ENCODE measurements at regions of chr16 and their contacts with region 1.

Region 1: DNA sequence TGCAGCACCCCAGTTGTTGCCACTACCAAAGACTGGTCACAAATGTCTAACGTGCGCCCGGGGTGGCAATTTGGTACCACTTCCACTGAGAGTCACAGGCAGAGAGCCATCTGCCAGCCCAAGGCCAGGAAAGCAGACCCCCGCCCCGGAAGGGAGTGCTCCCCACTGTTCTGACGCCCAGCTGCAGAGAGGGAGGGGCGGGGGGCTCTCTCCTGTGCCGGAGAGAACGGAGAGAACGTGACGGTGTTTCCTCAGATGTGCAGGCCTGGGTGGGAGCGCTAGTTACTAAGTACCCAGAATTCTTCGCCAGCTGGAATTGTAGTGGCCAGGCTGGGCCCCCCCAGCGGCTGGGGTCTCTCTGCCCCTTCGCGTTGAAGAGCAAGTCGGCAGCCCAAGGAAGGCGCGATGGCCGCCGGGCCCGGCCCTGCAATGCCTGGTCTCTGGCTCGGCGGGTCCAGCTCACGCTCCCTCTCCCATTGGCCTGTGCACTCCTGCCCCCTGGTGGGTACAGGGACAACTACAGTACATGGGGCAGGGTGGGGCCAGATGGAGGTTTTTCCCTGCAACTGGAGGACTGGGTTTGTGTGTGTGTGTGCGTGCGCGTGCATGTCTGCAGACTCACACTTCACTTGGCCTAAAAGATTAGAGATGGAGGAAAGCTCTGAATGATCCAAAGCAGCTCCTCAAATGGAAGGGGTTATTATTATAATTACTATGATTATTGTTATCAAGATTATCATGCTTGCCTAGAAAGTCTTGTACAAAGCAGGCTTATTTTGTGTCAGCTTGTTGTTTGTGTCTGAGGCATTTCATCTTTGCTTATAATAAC is 107.1 kb downstream of the AMFR start:
- DNase-seq: peak; percentile 60
- H3K4me3 ChIP-seq: no peak overlapping the region
- H3K27ac ChIP-seq: no peak overlapping the region
- H3K4me1 ChIP-seq: no peaks in the 10 kb centered on the region
- CTCF ChIP-seq: peak; percentile 87

Region 2: GRCh38 chr16:55944377-55944802 is 373.8 kb before region 1 on chr16:
- CTCF ChIA-PET with region 1: no interaction called
- POLR2A ChIA-PET with region 1: no interaction called
- intact Hi-C with region 1: loop called (anchors 1 kb)
- DNase-seq: peak; percentile 39
- H3K4me3 ChIP-seq: no peak overlapping the region
- H3K27ac ChIP-seq: no peak overlapping the region
- H3K4me1 ChIP-seq: no peaks in the 10 kb centered on the region
- CTCF ChIP-seq: peak; percentile 96

Region 3: GRCh38 chr16:56191156-56191815 is 126.9 kb before region 1 on chr16 and contains the start of gene GNAO1:
- CTCF ChIA-PET with region 1: no interaction called
- POLR2A ChIA-PET with region 1: no interaction called
- intact Hi-C with region 1: no loop called
- DNase-seq: no peak
- H3K4me3 ChIP-seq: no peak within 1 kb of the TSS
- H3K27ac ChIP-seq: no peak within 1 kb of the TSS
- H3K4me1 ChIP-seq: no peaks in the 10 kb centered on the region
- CTCF ChIP-seq: no peak
- total RNA-seq, gene GNAO1: not detected in 2 replicates

Region 4: GRCh38 chr16:56336711-56337110 is 18.5 kb after region 1 on chr16:
- CTCF ChIA-PET with region 1: no interaction called
- POLR2A ChIA-PET with region 1: no interaction called
- intact Hi-C with region 1: no loop called
- DNase-seq: no peak
- H3K4me3 ChIP-seq: no peak overlapping the region
- H3K27ac ChIP-seq: no peak overlapping the region
- H3K4me1 ChIP-seq: no peaks in the 10 kb centered on the region
- CTCF ChIP-seq: no peak